ENCODE measurements at regions of chr20 and their contacts with region 1.

Region 1: DNA sequence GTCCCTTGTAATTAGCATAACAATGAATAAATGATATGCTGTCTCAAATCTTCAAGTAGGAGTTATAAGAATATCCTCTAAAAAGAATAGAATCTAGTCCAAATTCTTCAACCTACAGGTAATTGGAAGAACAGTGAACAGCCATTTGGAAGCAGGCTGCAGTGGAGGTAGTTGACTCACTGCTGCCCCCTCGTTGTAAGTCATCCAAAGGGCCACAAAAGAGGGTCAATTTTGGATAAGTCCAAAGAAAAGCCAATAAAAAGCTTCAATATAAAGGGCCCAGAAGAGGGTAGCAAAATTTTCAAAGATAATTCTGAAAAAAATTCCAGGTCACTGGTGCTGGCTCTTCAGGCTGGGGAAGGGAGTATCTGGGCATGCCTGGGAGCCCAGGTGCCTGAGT is 60.8 kb upstream of the SSTR4 start:
- H3K4me3 Mint-ChIP-seq: no peak overlapping the region
- H3K27ac Mint-ChIP-seq: no peak overlapping the region
- H3K4me1 Mint-ChIP-seq: no peaks in the 10 kb centered on the region
- H3K27me3 Mint-ChIP-seq: peaks cover 76% of the 10 kb centered on the region

Region 2: GRCh38 chr20:22861229-22861980 is 112.9 kb before region 1 on chr20:
- intact Hi-C with region 1: loop called (anchors 10 kb)
- H3K4me3 Mint-ChIP-seq: no peak overlapping the region
- H3K27ac Mint-ChIP-seq: no peak overlapping the region
- H3K4me1 Mint-ChIP-seq: no peaks in the 10 kb centered on the region
- H3K27me3 Mint-ChIP-seq: peaks cover 18% of the 10 kb centered on the region